ENCODE measurements at regions of chr10 and their contacts with region 1.

Region 1: GRCh38 chr10:13586676-13587355 is at the start of gene PRPF18:
- DNase-seq: peak; percentile 98
- H3K4me3 Mint-ChIP-seq: peak within 1 kb of the TSS; percentile 96
- H3K27ac Mint-ChIP-seq: peak within 1 kb of the TSS; percentile 98
- H3K4me1 Mint-ChIP-seq: peaks cover 18% of the 10 kb centered on the region
- H3K27me3 Mint-ChIP-seq: peaks cover 13% of the 10 kb centered on the region
- total RNA-seq, gene PRPF18: 21.5 and 23.4 TPM in 2 replicates

Region 2: DNA sequence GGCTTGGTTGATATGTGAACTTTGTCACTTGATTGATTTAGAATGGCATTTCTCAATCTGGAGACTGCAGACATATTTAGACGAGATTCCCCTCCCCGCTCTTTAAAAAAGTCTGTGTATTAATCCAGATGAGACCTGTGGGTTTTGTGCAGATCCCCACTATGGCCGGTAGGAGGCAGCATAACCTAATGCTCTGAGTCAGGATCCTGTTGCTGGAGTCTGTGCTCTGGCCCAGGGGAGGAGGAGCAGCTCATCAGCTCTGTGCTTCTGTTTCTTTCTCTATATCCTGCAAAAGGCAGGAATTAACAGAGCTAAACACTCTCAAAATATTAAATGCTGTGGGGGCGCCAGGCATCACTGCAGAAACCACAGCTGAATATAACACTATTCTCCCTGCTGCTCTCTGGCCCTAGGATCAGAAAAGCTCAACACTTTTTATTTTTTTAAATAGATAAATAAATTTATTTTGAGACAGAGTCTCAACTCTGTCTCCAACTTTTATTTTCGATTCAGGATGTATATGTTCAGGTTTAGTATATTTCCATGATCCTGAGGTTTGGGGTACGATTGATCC is 214.8 kb before region 1 on chr10:
- intact Hi-C with region 1: loop called (anchors 1 kb)
- DNase-seq: peak; percentile 92
- H3K4me3 Mint-ChIP-seq: no peak overlapping the region
- H3K27ac Mint-ChIP-seq: no peak overlapping the region
- H3K4me1 Mint-ChIP-seq: no peaks in the 10 kb centered on the region
- H3K27me3 Mint-ChIP-seq: no peaks in the 10 kb centered on the region

Region 3: DNA sequence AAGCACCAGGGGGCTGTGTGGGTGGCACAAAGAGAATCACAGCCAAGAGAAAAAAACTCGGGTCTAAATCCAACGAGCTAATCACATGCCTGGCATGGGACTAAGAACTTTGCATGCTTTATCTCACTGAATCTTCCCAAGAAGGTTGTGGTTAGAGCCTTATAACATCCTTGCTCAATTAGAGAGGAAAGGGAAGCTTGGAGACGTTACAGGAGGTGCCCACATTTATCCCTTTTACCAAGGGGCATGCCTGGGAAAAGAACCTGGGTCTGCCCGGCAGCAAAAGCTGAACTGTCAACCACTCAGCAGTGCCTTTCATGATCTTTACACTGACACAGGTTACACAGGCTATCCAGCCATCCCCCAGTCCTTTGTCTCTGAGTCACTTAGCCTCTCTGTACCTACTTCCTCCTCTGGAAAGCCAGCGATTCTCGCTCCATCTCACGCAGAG is 190.1 kb after region 1 on chr10:
- intact Hi-C with region 1: loop called (anchors 1 kb)
- DNase-seq: no peak
- H3K4me3 Mint-ChIP-seq: no peak overlapping the region
- H3K27ac Mint-ChIP-seq: no peak overlapping the region
- H3K4me1 Mint-ChIP-seq: no peaks in the 10 kb centered on the region
- H3K27me3 Mint-ChIP-seq: peaks cover 17% of the 10 kb centered on the region

Region 4: GRCh38 chr10:13787015-13787421 is 200.2 kb after region 1 on chr10:
- intact Hi-C with region 1: loop called (anchors 2 kb)
- DNase-seq: peak; percentile 94
- H3K4me3 Mint-ChIP-seq: peak overlapping the region; percentile 71
- H3K27ac Mint-ChIP-seq: peak overlapping the region; percentile 91
- H3K4me1 Mint-ChIP-seq: peaks cover 29% of the 10 kb centered on the region
- H3K27me3 Mint-ChIP-seq: no peaks in the 10 kb centered on the region

Region 5: GRCh38 chr10:14009371-14010100 is 422.7 kb after region 1 on chr10:
- intact Hi-C with region 1: loop called (anchors 5 kb)
- DNase-seq: peak; percentile 85
- H3K4me3 Mint-ChIP-seq: peak overlapping the region; percentile 82
- H3K27ac Mint-ChIP-seq: peak overlapping the region; percentile 82
- H3K4me1 Mint-ChIP-seq: peaks cover 28% of the 10 kb centered on the region
- H3K27me3 Mint-ChIP-seq: peaks cover 22% of the 10 kb centered on the region

Measured in activated CD4-positive, alpha-beta T cell treated with anti-CD3 and anti-CD28 coated beads, Interleukin-2, amount 10 ng/mL, durations not matched to agents 24 days and 14 days (primary cell).